Sigmoid colon (tissue), 7 donors: ENCODE measurements at regions of chr2 and their contacts with region 1.

Region 1: DNA sequence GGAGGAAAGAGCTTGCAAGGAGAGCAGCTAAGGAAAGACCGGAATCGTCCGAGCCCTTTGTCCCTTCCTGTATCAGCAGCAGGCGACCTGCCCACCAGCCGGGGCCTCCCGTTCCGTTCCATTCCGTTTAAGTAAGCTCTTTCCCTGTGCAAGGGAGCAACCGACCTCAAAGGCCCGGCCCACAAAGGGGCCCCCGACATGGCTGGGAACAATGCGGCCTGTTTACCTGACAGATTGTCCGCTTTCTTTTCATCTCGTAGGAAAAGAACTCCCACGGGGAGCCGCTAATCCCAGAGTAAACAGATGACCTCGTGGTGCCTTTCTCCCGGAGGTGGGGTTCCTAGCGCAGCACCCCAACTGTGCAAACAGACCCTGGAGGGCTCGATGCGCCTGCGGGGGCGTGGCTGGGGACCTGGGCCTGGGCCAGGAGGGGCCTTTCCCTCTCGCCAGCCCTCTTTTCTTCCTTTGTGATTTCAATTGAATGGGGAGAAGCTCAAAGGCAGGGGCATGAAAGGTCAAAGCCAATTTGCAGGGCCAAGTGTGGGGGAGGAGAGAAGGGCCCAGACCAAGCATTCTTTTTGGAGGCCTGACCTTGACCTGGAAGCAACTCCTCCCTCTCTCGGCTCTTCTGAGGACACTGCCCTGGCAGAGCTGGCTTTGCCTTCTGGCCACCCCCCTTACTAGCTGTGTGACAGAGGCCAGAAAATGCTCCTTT is 120.2 kb downstream of the INHBB start:
- DNase-seq: no peak
- H3K4me3 ChIP-seq: no peak overlapping the region
- H3K27ac ChIP-seq: no peak overlapping the region
- H3K4me1 ChIP-seq: peaks cover 0 to 17% (median 9%) of the 10 kb centered on the region in 4 donors
- H3K27me3 ChIP-seq: peaks cover 0 to 9% (median 0%) of the 10 kb centered on the region in 3 donors
- CTCF ChIP-seq: no peak
- EP300 ChIP-seq: no peak
- POLR2A ChIP-seq: no peak

Region 2: DNA sequence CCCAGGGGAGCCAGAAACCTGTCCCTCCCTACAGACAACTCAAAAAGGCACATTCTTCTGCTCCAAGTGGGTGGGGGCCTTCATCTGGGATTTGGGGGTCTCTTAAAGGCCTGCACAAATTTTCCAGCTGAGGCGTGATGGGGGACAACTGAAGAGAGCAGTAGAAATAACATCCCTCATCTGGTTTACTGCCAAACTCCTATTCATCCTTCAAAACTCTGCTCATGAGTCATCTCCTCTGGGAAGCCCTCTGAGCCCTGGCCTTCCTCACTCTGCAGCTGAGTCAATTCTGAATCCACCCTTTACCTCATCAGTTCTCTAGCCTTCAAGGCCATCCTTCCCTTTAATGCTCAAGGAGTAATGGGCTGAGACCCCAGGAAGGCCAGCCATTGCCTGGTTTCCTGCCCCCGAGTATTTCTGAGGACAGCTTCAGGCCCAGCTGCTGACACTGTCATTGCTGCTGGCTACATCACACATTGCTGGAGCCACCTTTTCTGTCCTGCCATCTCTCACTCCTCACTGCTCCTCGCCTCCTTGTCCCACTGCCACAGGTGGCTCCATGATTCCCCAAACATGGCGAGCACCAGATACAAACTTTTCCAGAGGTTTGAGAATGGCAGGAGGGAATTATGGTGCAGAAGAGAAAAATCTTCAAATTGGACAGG is 237.3 kb after region 1 on chr2:
- intact Hi-C with region 1: no loop called
- DNase-seq: peak; percentile 34
- H3K4me3 ChIP-seq: no peak overlapping the region
- H3K27ac ChIP-seq: no peak overlapping the region
- H3K4me1 ChIP-seq: no peaks in the 10 kb centered on the region
- H3K27me3 ChIP-seq: no peaks in the 10 kb centered on the region
- CTCF ChIP-seq: no peak
- EP300 ChIP-seq: no peak
- POLR2A ChIP-seq: no peak

Region 3: GRCh38 chr2:120914839-120915521 is 448.8 kb after region 1 on chr2:
- intact Hi-C with region 1: loop called (anchors 5 kb)
- DNase-seq: peak; percentile 89
- H3K4me3 ChIP-seq: no peak overlapping the region
- H3K27ac ChIP-seq: peak overlapping the region; percentile 6 to 74 (median 45)
- H3K4me1 ChIP-seq: peaks cover 0 to 34% (median 30%) of the 10 kb centered on the region in 4 donors
- H3K27me3 ChIP-seq: no peaks in the 10 kb centered on the region
- CTCF ChIP-seq: no peak
- EP300 ChIP-seq: no peak
- POLR2A ChIP-seq: no peak